ENCODE measurements at regions of chr4 and their contacts with region 1.

Region 1: DNA sequence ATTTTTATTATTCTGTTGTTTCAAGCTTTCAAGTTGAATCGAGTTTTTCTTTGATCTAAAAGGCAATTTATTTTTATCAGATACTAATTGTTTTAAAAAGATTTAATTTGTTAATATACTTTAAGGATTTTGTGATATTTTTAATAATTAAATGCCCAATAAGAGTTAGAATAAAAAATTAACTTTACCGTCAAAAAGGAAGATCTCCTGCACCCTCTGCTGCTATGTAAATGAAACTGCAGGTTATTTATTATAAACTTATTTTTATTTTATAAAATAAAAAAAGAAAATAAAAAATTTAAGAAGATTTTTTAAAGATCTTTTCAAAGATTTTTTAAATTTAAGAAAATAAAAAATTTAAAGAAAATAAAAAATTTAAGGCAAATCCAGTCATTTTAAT is 166.1 kb downstream of the CCSER1 start:
- DNase-seq: no peak
- ATAC-seq: no peak
- H3K4me3 Mint-ChIP-seq: no peak overlapping the region
- H3K27ac Mint-ChIP-seq: no peak overlapping the region
- H3K4me1 Mint-ChIP-seq: no peaks in the 10 kb centered on the region
- H3K27me3 Mint-ChIP-seq: no peaks in the 10 kb centered on the region
- CTCF ChIP-seq: peak; percentile 79

Region 2: DNA sequence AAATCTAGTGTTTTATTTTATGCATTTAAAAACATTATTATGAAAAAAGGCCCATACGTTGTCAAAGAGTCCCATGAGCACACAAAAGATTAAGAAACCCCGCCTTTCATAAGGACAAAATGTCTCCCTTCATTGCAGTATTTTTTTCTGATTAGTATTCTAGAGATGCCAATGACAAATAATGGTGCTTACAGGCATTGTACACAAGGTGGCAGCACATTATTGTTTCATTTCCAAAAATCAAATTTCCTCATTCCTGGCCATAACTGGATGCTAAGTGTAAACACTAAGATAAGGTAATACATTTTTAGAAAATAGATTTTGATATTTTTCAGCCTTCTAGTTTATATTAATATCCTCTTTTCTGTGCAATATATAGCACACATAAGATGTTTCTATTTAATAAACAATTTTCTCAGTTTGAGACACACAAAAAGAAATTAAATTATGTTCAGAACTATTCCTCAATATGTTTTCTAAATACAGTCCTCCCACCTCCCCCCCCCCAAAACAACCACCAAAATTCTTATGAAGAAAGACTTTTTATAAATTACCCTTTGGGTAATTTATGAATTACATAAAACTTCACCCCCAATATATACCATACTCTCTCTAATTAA is 1134.3 kb before region 1 on chr4:
- CTCF ChIA-PET with region 1: no interaction called
- POLR2A ChIA-PET with region 1: no interaction called
- intact Hi-C with region 1: loop called (anchors 2 kb)
- DNase-seq: no peak
- ATAC-seq: peak; percentile 56
- H3K4me3 Mint-ChIP-seq: no peak overlapping the region
- H3K27ac Mint-ChIP-seq: no peak overlapping the region
- H3K4me1 Mint-ChIP-seq: no peaks in the 10 kb centered on the region
- H3K27me3 Mint-ChIP-seq: peaks cover 3% of the 10 kb centered on the region
- CTCF ChIP-seq: peak; percentile 55

Region 3: GRCh38 chr4:89657931-89658700 is 635.2 kb before region 1 on chr4:
- CTCF ChIA-PET with region 1: no interaction called
- POLR2A ChIA-PET with region 1: no interaction called
- intact Hi-C with region 1: loop called (anchors 5 kb)
- DNase-seq: no peak
- ATAC-seq: no peak
- H3K4me3 Mint-ChIP-seq: no peak overlapping the region
- H3K27ac Mint-ChIP-seq: peak overlapping the region; percentile 51
- H3K4me1 Mint-ChIP-seq: peaks cover 7% of the 10 kb centered on the region
- H3K27me3 Mint-ChIP-seq: peaks cover 2% of the 10 kb centered on the region
- CTCF ChIP-seq: no peak

Region 4: DNA sequence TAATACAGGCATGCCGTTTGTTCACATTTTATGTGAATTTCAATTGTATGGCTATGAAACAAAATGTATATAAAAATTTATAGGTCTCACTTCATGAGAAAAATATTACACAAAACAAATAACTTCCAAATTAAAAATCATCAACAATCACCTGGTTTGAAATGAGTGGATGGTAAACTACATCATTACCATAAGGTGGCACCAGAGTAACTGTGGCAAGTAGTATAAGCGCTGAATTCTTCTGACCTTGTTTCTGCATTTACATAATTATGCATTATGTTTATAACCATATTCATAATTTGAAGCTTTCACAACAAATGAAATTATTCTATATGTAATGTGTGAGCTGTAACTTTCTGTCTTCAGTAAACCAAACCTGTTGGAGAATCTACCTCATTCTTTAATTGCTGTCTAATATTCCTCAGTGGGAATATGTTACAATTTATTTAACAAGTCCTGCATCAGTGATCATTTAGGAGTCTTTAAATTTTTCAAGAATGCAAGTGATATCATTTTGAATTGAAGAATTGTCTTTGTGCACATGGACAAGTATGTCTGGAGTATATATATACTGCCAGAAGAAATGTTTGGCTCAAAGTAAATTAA is 343.4 kb before region 1 on chr4:
- CTCF ChIA-PET with region 1: interaction called, 4 read pairs
- POLR2A ChIA-PET with region 1: no interaction called
- intact Hi-C with region 1: loop called (anchors 1 kb)
- DNase-seq: no peak
- ATAC-seq: no peak
- H3K4me3 Mint-ChIP-seq: no peak overlapping the region
- H3K27ac Mint-ChIP-seq: no peak overlapping the region
- H3K4me1 Mint-ChIP-seq: no peaks in the 10 kb centered on the region
- H3K27me3 Mint-ChIP-seq: no peaks in the 10 kb centered on the region
- CTCF ChIP-seq: no peak

Region 5: DNA sequence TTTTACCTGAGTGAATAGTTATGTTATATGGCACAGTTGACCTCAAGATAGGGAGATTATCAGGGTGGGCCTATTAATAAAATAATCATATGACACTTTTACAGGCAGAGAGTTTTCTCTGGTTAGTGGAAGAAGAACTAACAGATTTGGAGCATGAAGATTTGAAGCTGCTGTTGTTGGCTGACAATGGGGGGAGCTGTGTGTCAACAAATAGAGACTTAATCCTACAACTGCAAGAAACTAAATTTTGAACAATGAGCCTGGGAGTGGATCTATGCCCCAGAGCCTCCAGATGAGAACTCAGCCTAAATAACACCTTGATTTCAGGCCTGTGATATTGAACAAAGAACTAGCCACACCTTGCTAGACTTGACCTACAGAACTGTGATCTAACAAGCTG is 173.3 kb before region 1 on chr4:
- CTCF ChIA-PET with region 1: interaction called, 9 read pairs
- POLR2A ChIA-PET with region 1: no interaction called
- intact Hi-C with region 1: loop called (anchors 2 kb)
- DNase-seq: no peak
- ATAC-seq: no peak
- H3K4me3 Mint-ChIP-seq: no peak overlapping the region
- H3K27ac Mint-ChIP-seq: no peak overlapping the region
- H3K4me1 Mint-ChIP-seq: peaks cover 7% of the 10 kb centered on the region
- H3K27me3 Mint-ChIP-seq: no peaks in the 10 kb centered on the region
- CTCF ChIP-seq: no peak

Measured in activated B cell treated with CpG ODN at 0.5 μM for 24 hours (primary cell).